ENCODE measurements at regions of chr6 and their contacts with region 1.

Region 1: DNA sequence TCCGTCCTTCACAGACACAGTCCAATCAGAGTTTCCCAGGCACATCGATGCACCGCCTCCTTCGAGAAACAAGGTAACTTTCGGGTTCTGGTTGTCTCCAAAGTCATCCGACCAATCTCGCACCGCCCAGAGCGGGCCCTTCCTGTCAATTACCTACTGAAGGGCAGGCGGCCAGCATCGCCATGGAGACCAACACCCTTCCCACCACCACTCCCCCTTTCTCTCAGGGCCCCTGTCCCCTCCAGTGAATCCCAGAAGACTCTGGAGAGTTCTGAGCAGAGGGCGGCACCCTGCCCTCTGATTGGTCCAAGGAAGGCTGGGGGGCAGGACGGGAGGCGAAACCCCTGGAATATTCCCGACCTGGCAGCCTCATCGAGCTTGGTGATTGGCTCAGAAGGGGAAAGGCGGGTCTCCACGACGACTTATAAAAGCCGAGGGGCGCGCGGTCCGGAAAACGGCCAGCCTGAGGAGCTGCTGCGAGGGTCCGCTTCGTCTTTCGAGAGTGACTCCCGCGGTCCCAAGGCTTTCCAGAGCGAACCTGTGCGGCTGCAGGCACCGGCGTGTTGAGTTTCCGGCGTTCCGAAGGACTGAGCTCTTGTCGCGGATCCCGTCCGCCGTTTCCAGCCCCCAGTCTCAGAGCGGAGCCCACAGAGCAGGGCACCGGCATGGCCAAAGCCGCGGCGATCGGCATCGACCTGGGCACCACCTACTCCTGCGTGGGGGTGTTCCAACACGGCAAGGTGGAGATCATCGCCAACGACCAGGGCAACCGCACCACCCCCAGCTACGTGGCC is at the start of gene HSPA1B:
- DNase-seq: peak; percentile 86 to 89 (median 87)
- H3K4me3 ChIP-seq: peak within 1 kb of the TSS; percentile 67 to 90
- H3K4me3 Mint-ChIP-seq: peak within 1 kb of the TSS; percentile 88 to 98 (median 95)
- H3K27ac ChIP-seq: peak within 1 kb of the TSS; percentile 83
- H3K27ac Mint-ChIP-seq: peak within 1 kb of the TSS; percentile 93 to 99 (median 96)
- H3K4me1 ChIP-seq: peaks cover 45% of the 10 kb centered on the region
- H3K4me1 Mint-ChIP-seq: peaks cover 18 to 55% (median 37%) of the 10 kb centered on the region in 4 donors
- H3K27me3 ChIP-seq: no peaks in the 10 kb centered on the region
- H3K27me3 Mint-ChIP-seq: no peaks in the 10 kb centered on the region
- total RNA-seq, gene HSPA1B: 58.0 to 60.8 TPM

Region 2: GRCh38 chr6:31546962-31547726 is 280.3 kb before region 1 on chr6 and contains the start of gene NFKBIL1:
- CTCF ChIA-PET with region 1: interaction called, 24 read pairs
- POLR2A ChIA-PET with region 1: interaction called, 10 read pairs
- intact Hi-C with region 1: loop called (anchors 1 kb)
- DNase-seq: peak; percentile 83 to 91 (median 85)
- H3K4me3 ChIP-seq: peak within 1 kb of the TSS; percentile 55 to 79
- H3K4me3 Mint-ChIP-seq: peak within 1 kb of the TSS; percentile 85 to 93 (median 88)
- H3K27ac ChIP-seq: peak within 1 kb of the TSS; percentile 85
- H3K27ac Mint-ChIP-seq: peak within 1 kb of the TSS; percentile 93 to 99 (median 97)
- H3K4me1 ChIP-seq: peaks cover 45% of the 10 kb centered on the region
- H3K4me1 Mint-ChIP-seq: peaks cover 24 to 49% (median 36%) of the 10 kb centered on the region in 4 donors
- H3K27me3 ChIP-seq: no peaks in the 10 kb centered on the region
- H3K27me3 Mint-ChIP-seq: no peaks in the 10 kb centered on the region
- total RNA-seq, gene NFKBIL1: 9.8 to 13.3 TPM

Region 3: GRCh38 chr6:31680840-31681671 is 146.4 kb before region 1 on chr6 and contains the start of gene LY6G5C:
- CTCF ChIA-PET with region 1: interaction called, 11 read pairs
- POLR2A ChIA-PET with region 1: interaction called, 10 read pairs
- intact Hi-C with region 1: loop called (anchors 1 kb)
- DNase-seq: peak in 4 of 5 donors; percentile 51 to 59 (median 56)
- H3K4me3 ChIP-seq: peak within 1 kb of the TSS; percentile 69 to 70
- H3K4me3 Mint-ChIP-seq: peak within 1 kb of the TSS; percentile 86 to 91 (median 90)
- H3K27ac ChIP-seq: peak within 1 kb of the TSS; percentile 51
- H3K27ac Mint-ChIP-seq: peak within 1 kb of the TSS; percentile 77 to 92 (median 86)
- H3K4me1 ChIP-seq: peaks cover 19% of the 10 kb centered on the region
- H3K4me1 Mint-ChIP-seq: peaks cover 11 to 27% (median 16%) of the 10 kb centered on the region in 4 donors
- H3K27me3 ChIP-seq: no peaks in the 10 kb centered on the region
- H3K27me3 Mint-ChIP-seq: no peaks in the 10 kb centered on the region
- total RNA-seq, gene LY6G5C: 4.4 to 4.5 TPM

Region 4: DNA sequence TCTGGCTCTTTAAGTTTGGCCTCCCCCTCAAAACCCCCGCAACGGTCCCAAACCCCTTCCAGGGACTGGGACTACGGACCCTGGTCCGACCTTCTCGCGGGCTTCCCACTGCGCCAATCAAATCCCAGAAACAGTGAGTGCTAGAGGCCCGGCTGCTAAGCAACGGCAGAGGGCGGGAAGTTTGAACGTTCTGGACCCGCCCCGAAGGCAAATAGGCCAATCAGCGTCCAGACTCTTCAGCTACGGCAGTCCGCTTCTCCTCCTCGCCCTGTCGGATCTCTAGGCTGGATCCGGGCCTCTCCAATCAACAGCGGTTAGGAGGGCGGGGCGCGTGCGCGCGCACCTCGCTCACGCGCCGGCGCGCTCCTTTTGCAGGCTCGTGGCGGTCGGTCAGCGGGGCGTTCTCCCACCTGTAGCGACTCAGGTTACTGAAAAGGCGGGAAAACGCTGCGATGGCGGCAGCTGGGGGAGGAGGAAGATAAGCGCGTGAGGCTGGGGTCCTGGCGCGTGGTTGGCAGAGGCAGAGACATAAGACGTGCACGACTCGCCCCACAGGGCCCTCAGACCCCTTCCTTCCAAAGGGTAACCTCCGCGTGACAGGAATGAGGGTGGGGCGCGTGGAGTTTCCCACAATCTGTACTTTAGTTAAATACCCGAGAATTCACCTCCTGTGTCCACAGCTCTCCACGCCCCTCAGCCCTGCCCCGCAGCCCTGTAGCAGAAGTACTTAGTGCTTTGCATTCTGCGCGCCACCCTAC is 87.7 kb before region 1 on chr6 and contains the start of gene MSH5:
- CTCF ChIA-PET with region 1: interaction called, 26 read pairs
- POLR2A ChIA-PET with region 1: interaction called, 81 read pairs
- intact Hi-C with region 1: no loop called
- DNase-seq: peak; percentile 92 to 97 (median 94)
- H3K4me3 ChIP-seq: peak within 1 kb of the TSS; percentile 82
- H3K4me3 Mint-ChIP-seq: peak within 1 kb of the TSS; percentile 89 to 99 (median 98)
- H3K27ac ChIP-seq: peak within 1 kb of the TSS; percentile 64
- H3K27ac Mint-ChIP-seq: peak within 1 kb of the TSS; percentile 94 to 97 (median 95)
- H3K4me1 ChIP-seq: peaks cover 42% of the 10 kb centered on the region
- H3K4me1 Mint-ChIP-seq: peaks cover 33 to 64% (median 51%) of the 10 kb centered on the region in 4 donors
- H3K27me3 ChIP-seq: no peaks in the 10 kb centered on the region
- H3K27me3 Mint-ChIP-seq: no peaks in the 10 kb centered on the region
- total RNA-seq, gene MSH5: 11.4 to 12.1 TPM

Region 5: DNA sequence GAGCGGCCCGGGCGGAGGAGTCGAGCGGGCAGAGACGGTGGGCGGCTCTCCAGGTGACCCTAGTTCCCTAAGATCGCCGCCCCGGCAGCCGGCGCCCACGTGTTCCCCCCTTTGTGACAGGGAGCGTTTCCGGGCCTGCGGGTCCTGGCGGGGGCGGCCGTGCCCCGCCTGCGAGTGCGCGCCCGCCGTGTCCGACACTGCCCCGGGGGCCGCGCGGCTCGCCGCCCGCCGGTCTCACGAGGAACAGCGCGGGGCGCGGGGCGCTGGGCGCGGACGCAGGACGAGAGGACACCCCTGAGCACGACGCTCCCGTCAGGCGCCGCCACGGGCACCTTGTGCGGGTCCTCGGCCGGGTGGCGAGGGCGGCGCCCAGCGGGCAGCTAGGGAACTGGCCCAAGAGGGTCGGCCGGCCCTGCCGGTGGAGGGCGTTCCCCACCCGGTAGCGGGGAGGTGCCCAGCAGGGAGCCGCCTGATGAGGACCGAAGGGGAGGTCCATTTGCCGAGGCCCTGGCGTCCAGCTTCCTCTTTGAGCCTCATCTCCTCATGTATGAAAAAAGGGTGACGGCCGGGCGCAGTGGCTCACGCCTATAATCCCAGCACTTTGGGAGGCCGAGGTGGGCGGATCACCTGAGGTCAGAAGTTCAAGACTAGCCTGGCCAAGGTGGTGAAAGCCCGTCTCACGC is 31.7 kb before region 1 on chr6 and contains the start of gene VARS1:
- CTCF ChIA-PET with region 1: interaction called, 6 read pairs
- POLR2A ChIA-PET with region 1: interaction called, 23 read pairs
- intact Hi-C with region 1: loop called (anchors 1 kb)
- DNase-seq: peak; percentile 83 to 90 (median 84)
- H3K4me3 ChIP-seq: peak within 1 kb of the TSS; percentile 72 to 96
- H3K4me3 Mint-ChIP-seq: peak within 1 kb of the TSS; percentile 94 to 99 (median 97)
- H3K27ac ChIP-seq: peak within 1 kb of the TSS; percentile 95
- H3K27ac Mint-ChIP-seq: peak within 1 kb of the TSS; percentile 63 to 99 (median 98)
- H3K4me1 ChIP-seq: peaks cover 55% of the 10 kb centered on the region
- H3K4me1 Mint-ChIP-seq: peaks cover 22 to 64% (median 37%) of the 10 kb centered on the region in 4 donors
- H3K27me3 ChIP-seq: no peaks in the 10 kb centered on the region
- H3K27me3 Mint-ChIP-seq: no peaks in the 10 kb centered on the region
- total RNA-seq, gene VARS1: 39.6 to 46.8 TPM

Region 6: DNA sequence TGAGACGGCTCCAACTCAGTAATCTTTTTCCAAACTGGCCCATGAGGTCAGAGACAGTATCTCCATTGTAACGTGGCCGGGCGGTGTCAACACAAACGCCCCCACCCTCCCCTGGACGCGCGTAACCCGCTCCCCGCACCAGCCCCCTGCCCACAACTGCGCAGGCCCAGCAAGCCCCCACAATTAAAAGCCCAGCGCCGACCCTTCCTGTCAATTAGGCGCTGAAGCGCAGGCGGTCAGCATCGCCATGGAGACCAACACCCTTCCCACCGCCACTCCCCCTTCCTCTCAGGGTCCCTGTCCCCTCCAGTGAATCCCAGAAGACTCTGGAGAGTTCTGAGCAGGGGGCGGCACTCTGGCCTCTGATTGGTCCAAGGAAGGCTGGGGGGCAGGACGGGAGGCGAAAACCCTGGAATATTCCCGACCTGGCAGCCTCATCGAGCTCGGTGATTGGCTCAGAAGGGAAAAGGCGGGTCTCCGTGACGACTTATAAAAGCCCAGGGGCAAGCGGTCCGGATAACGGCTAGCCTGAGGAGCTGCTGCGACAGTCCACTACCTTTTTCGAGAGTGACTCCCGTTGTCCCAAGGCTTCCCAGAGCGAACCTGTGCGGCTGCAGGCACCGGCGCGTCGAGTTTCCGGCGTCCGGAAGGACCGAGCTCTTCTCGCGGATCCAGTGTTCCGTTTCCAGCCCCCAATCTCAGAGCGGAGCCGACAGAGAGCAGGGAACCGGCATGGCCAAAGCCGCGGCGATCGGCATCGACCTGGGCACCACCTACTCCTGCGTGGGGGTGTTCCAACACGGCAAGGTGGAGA is 12.3 kb before region 1 on chr6 and contains the starts of genes HSPA1A and HSPA1L:
- CTCF ChIA-PET with region 1: interaction called, 15 read pairs
- POLR2A ChIA-PET with region 1: interaction called, 67 read pairs
- intact Hi-C with region 1: loop called (anchors 2 kb)
- DNase-seq: peak; percentile 38 to 69 (median 42)
- H3K4me3 ChIP-seq: peak within 1 kb of the TSS; percentile 81 to 97
- H3K4me3 Mint-ChIP-seq: peak within 1 kb of the TSS; percentile 91 to 96 (median 94)
- H3K27ac ChIP-seq: peak within 1 kb of the TSS; percentile 82
- H3K27ac Mint-ChIP-seq: peak within 1 kb of the TSS; percentile 88 to 95 (median 92)
- H3K4me1 ChIP-seq: peaks cover 50% of the 10 kb centered on the region
- H3K4me1 Mint-ChIP-seq: peaks cover 31 to 66% (median 46%) of the 10 kb centered on the region in 4 donors
- H3K27me3 ChIP-seq: no peaks in the 10 kb centered on the region
- H3K27me3 Mint-ChIP-seq: no peaks in the 10 kb centered on the region
- total RNA-seq, gene HSPA1A: 69.9 to 71.5 TPM
- total RNA-seq, gene HSPA1L: 8.2 to 8.3 TPM

Region 7: GRCh38 chr6:31847276-31847978 is 19.9 kb after region 1 on chr6:
- CTCF ChIA-PET with region 1: no interaction called
- POLR2A ChIA-PET with region 1: no interaction called
- intact Hi-C with region 1: no loop called
- DNase-seq: no peak
- H3K4me3 ChIP-seq: no peak overlapping the region
- H3K4me3 Mint-ChIP-seq: no peak overlapping the region
- H3K27ac ChIP-seq: no peak overlapping the region
- H3K27ac Mint-ChIP-seq: peak overlapping the region in 1 of 7 donors; percentile 66
- H3K4me1 ChIP-seq: no peaks in the 10 kb centered on the region
- H3K4me1 Mint-ChIP-seq: peaks cover 0 to 3% (median 0%) of the 10 kb centered on the region in 4 donors
- H3K27me3 ChIP-seq: no peaks in the 10 kb centered on the region
- H3K27me3 Mint-ChIP-seq: no peaks in the 10 kb centered on the region

Region 8: GRCh38 chr6:32047850-32048766 is 220.6 kb after region 1 on chr6:
- CTCF ChIA-PET with region 1: no interaction called
- POLR2A ChIA-PET with region 1: no interaction called
- intact Hi-C with region 1: no loop called
- DNase-seq: peak in 4 of 5 donors; percentile 52 to 65 (median 56)
- H3K4me3 ChIP-seq: no peak overlapping the region
- H3K4me3 Mint-ChIP-seq: peak overlapping the region in 1 of 8 donors; percentile 64
- H3K27ac ChIP-seq: no peak overlapping the region
- H3K27ac Mint-ChIP-seq: peak overlapping the region in 1 of 7 donors; percentile 43
- H3K4me1 ChIP-seq: peaks cover 10% of the 10 kb centered on the region
- H3K4me1 Mint-ChIP-seq: peaks cover 3 to 8% (median 5%) of the 10 kb centered on the region in 4 donors
- H3K27me3 ChIP-seq: no peaks in the 10 kb centered on the region
- H3K27me3 Mint-ChIP-seq: peaks cover 0 to 5% of the 10 kb centered on the region in 2 donors

Region 9: GRCh38 chr6:32108094-32108627 is 280.7 kb after region 1 on chr6:
- CTCF ChIA-PET with region 1: no interaction called
- POLR2A ChIA-PET with region 1: no interaction called
- intact Hi-C with region 1: no loop called
- DNase-seq: no peak
- H3K4me3 ChIP-seq: no peak overlapping the region
- H3K4me3 Mint-ChIP-seq: peak overlapping the region in 1 of 8 donors; percentile 47
- H3K27ac ChIP-seq: no peak overlapping the region
- H3K27ac Mint-ChIP-seq: peak overlapping the region in 1 of 7 donors; percentile 32
- H3K4me1 ChIP-seq: peaks cover 15% of the 10 kb centered on the region
- H3K4me1 Mint-ChIP-seq: peaks cover 11 to 27% (median 19%) of the 10 kb centered on the region in 4 donors
- H3K27me3 ChIP-seq: no peaks in the 10 kb centered on the region
- H3K27me3 Mint-ChIP-seq: peaks cover 8 to 25% of the 10 kb centered on the region in 2 donors